Adrenal gland (tissue), 19 donors: ENCODE measurements at regions of chr17 and their contacts with region 1.

Region 1: GRCh38 chr17:47315451-47316266 is 8.1 kb upstream of the EFCAB13 start:
- DNase-seq: peak in 4 of 7 donors; percentile 35 to 51 (median 40)
- H3K4me3 ChIP-seq: no peak overlapping the region
- H3K27ac ChIP-seq: no peak overlapping the region
- H3K4me1 ChIP-seq: peaks cover 0 to 18% of the 10 kb centered on the region in 2 donors
- H3K27me3 ChIP-seq: no peaks in the 10 kb centered on the region
- CTCF ChIP-seq: peak; percentile 55 to 92 (median 86)
- POLR2A ChIP-seq: no peak

Region 2: GRCh38 chr17:46940621-46941404 is 374.8 kb before region 1 on chr17:
- intact Hi-C with region 1: loop called in 1 of 2 experiments (anchors 10 kb)
- DNase-seq: peak; percentile 78 to 92 (median 86)
- H3K4me3 ChIP-seq: no peak overlapping the region
- H3K27ac ChIP-seq: no peak overlapping the region
- H3K4me1 ChIP-seq: peaks cover 14 to 15% of the 10 kb centered on the region in 2 donors
- H3K27me3 ChIP-seq: no peaks in the 10 kb centered on the region
- CTCF ChIP-seq: peak; percentile 77 to 87 (median 80)
- POLR2A ChIP-seq: no peak

Region 3: DNA sequence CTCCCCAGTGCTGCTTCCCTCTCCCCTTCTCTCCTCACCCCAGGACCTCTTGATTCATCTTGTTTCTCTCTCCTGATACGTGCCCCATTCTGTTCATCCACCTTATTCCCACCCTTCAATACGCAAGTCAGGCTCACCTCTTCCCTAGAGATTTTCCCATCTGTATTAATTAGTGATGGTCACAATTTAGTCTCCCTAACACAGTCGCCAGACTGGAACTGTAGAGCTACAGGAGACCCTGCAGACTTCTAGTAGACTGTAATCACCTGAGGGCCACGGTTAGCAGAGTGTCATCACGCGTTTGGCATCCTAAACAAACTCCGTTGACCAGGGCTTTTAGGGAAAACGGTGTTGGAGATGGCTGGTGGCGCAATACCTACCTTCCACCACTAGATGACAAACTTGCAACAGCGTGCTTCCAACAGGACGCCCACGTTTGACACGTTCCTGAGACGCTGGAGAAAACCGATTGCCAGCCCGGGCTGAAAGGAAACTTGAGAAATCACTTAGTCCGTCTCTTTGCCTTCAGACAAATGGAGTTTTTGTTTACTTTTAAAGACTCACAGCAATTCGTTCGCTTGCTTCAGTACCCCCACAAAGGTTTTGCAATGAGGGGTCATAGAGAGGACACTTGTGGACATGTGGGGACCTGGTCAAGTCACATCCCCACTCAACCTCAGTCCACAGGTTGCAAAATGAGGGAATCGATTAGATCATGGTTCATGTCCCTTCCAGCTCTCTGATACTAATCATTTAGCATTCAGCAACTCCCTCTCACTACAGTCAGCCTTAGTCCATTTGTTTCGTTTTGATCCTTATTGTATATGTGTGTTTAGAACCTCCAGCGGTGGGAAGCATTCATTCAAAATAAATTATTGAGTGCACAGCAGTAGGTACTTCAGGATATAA is 85.9 kb before region 1 on chr17:
- intact Hi-C with region 1: loop called (anchors 2 to 5 kb)
- DNase-seq: peak; percentile 82 to 96 (median 91)
- H3K4me3 ChIP-seq: peak overlapping the region in 1 of 4 donors; percentile 4
- H3K27ac ChIP-seq: peak overlapping the region in 2 of 5 donors; percentile 8 to 18
- H3K4me1 ChIP-seq: peaks cover 5 to 23% of the 10 kb centered on the region in 2 donors
- H3K27me3 ChIP-seq: no peaks in the 10 kb centered on the region
- CTCF ChIP-seq: peak; percentile 90 to 99 (median 98)
- POLR2A ChIP-seq: no peak

Region 4: DNA sequence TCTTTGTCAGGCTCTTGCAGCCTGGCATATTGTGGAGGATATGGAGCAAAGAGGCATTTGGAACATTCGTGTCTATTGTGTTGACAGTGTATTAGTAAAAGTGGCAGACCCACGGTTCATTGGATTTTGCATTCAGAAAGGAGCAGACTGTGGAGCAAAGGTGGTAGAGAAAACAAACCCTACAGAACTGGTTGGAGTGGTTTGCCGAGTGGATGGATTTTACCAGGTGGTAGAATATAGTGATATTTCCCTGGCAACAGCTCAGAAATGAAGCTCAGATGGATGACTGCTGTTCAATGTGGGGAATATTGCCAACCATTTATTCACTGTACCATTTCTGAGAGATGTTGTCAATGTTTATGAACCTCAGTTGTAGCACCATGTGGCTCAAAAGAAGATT is 52.6 kb after region 1 on chr17:
- intact Hi-C with region 1: no loop called
- DNase-seq: no peak
- H3K4me3 ChIP-seq: no peak overlapping the region
- H3K27ac ChIP-seq: no peak overlapping the region
- H3K4me1 ChIP-seq: no peaks in the 10 kb centered on the region
- H3K27me3 ChIP-seq: no peaks in the 10 kb centered on the region
- CTCF ChIP-seq: no peak
- POLR2A ChIP-seq: no peak